ENCODE measurements at regions of chr7 and their contacts with region 1.

Region 1: GRCh38 chr7:97117372-97118188 is at the start of gene SDHAF3:
- DNase-seq: peak; percentile 97
- H3K4me3 Mint-ChIP-seq: peak within 1 kb of the TSS; percentile 95
- H3K27ac Mint-ChIP-seq: peak within 1 kb of the TSS; percentile 90
- H3K4me1 Mint-ChIP-seq: peaks cover 37% of the 10 kb centered on the region
- H3K27me3 Mint-ChIP-seq: no peaks in the 10 kb centered on the region
- total RNA-seq, gene SDHAF3: 23.7 and 26.9 TPM in 2 replicates

Region 2: GRCh38 chr7:96709381-96710228 is 408.0 kb before region 1 on chr7 and contains the start of gene SEM1:
- intact Hi-C with region 1: loop called (anchors 2 kb)
- DNase-seq: peak; percentile 57
- H3K4me3 Mint-ChIP-seq: peak within 1 kb of the TSS; percentile 98
- H3K27ac Mint-ChIP-seq: peak within 1 kb of the TSS; percentile 95
- H3K4me1 Mint-ChIP-seq: peaks cover 15% of the 10 kb centered on the region
- H3K27me3 Mint-ChIP-seq: no peaks in the 10 kb centered on the region
- total RNA-seq, gene SEM1: 39.0 and 51.9 TPM in 2 replicates

Region 3: GRCh38 chr7:97446361-97446760 is 328.8 kb after region 1 on chr7:
- intact Hi-C with region 1: no loop called
- DNase-seq: no peak
- H3K4me3 Mint-ChIP-seq: no peak overlapping the region
- H3K27ac Mint-ChIP-seq: no peak overlapping the region
- H3K4me1 Mint-ChIP-seq: no peaks in the 10 kb centered on the region
- H3K27me3 Mint-ChIP-seq: no peaks in the 10 kb centered on the region